GM10248 (cell line): ENCODE measurements at regions of chr13 and their contacts with region 1.

Region 1: DNA sequence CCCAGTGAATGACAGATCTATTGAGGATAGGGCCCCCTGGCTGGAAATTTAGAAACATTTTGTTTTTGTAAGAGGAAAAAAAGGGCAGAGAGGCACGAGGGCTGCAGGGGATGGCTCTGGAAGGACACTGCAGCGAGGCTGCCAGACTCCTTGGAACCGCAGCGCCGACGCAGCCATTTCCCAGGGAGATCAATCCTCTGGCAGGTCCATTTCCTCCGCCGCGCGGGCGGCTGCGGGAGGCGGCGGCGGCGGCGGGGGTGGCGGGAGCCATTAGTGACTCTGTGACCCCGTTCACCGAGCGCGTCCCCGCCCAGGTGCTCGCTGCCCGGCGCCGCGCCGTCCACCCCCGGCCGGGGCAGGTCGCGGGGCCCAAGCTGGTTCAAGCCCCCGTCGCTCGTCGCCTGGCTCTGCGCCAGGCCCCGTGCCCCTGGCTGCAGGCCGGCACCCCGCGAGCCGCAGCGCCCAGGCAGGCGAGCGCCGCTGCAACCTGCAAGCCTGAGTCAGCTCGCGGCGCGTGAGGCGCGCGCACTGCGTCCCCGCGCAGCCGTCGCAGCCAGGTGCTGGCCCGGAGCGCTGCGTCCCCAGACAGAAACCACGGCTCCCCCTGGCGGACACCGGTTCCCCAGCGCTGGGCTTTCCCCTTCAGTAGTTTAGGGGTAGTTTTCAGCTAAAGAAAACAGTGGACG is 192.6 kb downstream of the KATNAL1 start:
- DNase-seq: peak; percentile 90
- CTCF ChIP-seq: peak; percentile 82

Region 2: DNA sequence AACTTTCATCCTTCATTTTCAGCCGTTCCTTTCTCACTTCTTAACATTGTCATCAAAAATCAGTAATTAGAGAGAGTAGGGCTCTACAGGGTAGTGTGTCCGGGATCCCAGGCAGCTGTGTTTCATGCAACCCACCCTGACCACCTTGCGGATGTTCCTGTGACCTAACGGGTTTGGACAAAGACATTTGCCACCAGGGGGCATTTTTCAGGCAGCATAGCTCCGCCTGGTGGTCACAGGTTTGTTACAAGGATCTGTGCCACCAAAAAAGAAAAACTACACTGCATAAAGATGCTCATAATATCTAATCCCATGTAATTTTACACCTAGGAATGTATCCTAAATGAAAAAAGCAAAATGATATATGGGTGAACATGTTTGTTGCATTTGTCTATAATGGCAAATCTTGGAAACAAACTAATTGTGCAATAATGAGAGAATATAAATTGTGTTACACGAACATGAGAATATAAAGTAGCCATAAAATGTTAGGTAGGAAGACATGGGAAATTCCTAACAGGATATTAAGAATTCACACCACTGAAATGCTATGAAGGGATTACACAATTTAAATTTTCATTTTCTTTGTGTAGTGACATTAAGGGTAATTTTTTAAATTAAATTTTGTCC is 642.3 kb before region 1 on chr13:
- CTCF ChIA-PET with region 1: interaction called, 11 read pairs
- POLR2A ChIA-PET with region 1: no interaction called
- DNase-seq: peak; percentile 61
- CTCF ChIP-seq: peak; percentile 94

Region 3: DNA sequence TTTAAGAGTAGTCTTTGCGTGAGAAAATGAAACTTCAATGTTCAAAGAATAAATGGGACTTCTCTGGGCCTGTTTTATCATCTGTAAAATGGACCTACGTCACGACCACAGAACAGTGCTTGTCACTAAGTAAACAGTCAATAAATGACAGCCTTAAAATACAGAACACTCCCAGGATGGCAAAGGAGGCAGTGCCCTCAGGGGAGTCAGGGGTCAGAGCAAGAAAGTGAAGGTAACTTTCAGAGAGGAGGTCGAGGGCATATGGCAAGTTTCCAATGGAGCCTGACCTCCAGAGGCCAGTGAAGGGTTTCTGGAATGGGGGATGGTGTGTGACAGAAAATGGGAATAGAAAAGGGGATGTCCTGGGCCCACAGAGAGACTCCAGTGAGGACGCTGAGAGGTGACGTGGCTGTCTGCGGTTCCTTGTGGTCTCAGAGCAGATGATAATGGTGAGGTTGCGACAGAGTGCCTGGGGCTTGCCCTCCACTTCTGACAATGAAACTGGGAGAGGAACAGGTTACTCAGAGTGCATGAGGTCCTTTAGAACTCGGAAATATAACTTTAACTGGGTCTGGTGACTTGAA is 356.1 kb before region 1 on chr13:
- CTCF ChIA-PET with region 1: interaction called, 19 read pairs
- POLR2A ChIA-PET with region 1: no interaction called
- DNase-seq: peak; percentile 69
- CTCF ChIP-seq: no peak

Region 4: GRCh38 chr13:29771247-29771646 is 343.5 kb before region 1 on chr13:
- CTCF ChIA-PET with region 1: interaction called, 169 read pairs
- POLR2A ChIA-PET with region 1: no interaction called
- DNase-seq: no peak
- CTCF ChIP-seq: peak; percentile 52

Region 5: DNA sequence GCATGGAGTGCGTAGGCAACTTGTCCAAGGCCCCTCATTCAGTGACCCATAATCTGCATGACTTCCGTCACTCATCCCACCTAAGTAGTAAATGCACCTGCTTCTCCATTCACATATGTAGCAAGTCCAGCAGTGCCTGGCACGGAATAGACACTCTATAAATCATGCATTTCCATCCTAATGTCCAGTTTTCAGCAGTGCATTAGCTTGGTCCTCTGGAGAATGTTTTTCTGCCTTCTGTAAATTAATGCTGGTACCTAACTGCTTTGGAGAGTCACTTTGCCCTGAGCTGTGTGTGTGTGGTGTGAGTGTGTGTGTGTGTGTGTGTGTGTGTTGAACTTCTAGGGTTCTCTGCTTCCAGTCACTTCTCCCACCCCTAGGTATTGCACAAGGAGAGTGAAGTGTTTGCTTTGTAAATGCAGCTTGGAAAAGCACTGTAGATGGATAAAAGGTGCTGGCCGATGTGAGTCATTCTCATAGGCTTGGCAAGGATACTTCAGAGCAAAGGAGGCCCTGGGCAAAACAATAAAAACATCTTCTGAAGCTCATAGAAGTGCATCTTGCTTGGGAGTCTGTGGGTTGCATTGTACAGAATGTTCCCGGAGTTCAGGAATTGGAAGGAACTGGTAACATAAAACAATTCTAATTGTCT is 10.8 kb after region 1 on chr13:
- CTCF ChIA-PET with region 1: interaction called, 113 read pairs
- POLR2A ChIA-PET with region 1: interaction called, 4 read pairs
- DNase-seq: no peak
- CTCF ChIP-seq: no peak

Region 6: DNA sequence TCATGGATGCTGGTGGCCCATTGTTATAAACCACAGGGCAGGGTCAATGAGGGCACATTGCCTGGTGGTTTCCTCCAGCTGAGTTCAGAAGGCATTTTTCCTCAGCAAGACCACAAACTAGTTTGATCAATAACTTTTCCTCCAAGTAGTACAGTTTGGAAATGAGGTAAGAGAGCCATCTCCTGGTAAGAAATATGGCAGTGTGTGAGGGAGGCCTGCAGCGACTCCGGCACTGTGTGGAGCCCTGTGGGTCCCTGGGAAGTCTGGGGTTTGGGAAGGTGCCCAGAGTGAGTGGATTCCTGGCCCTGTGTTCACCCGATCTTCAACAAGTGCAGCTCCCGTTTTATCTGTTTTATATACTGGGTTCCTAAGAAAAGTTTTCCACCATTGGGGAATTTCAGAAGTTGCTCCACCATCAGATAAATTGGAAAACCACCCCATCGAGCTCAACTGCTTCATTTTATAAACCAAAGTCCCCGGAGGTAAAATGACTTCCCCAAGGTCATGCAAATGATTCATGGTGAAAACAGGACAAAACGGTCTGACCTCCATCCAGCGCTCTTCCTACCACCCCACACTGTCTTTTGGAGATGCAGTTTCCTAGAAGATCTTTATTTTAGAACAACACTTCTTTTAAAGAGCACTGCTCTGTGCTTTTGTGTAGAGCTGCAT is 44.2 kb after region 1 on chr13:
- CTCF ChIA-PET with region 1: interaction called, 21 read pairs
- POLR2A ChIA-PET with region 1: no interaction called
- DNase-seq: no peak
- CTCF ChIP-seq: peak; percentile 22

Region 7: GRCh38 chr13:30175166-30175565 is 60.5 kb after region 1 on chr13:
- CTCF ChIA-PET with region 1: no interaction called
- POLR2A ChIA-PET with region 1: no interaction called
- DNase-seq: no peak
- CTCF ChIP-seq: no peak